Activated CD4-positive, alpha-beta memory T cell treated with anti-CD3 and anti-CD28 coated beads for 36 hours (primary cell): ENCODE measurements at regions of chr1 and their contacts with region 1.

Region 1: GRCh38 chr1:65067491-65068201 is 80.4 kb upstream of the AK4 start:
- DNase-seq: peak; percentile 66
- H3K4me3 Mint-ChIP-seq: peak overlapping the region; percentile 87
- H3K27ac Mint-ChIP-seq: peak overlapping the region; percentile 93
- H3K4me1 Mint-ChIP-seq: peaks cover 53% of the 10 kb centered on the region
- H3K27me3 Mint-ChIP-seq: no peaks in the 10 kb centered on the region

Region 2: GRCh38 chr1:63522891-63523728 is 1544.5 kb before region 1 on chr1 and contains the starts of genes EFCAB7 and ITGB3BP:
- CTCF ChIA-PET with region 1: no interaction called
- POLR2A ChIA-PET with region 1: no interaction called
- intact Hi-C with region 1: loop called (anchors 10 kb)
- DNase-seq: peak; percentile 89
- H3K4me3 Mint-ChIP-seq: peak within 1 kb of the TSS; percentile 94
- H3K27ac Mint-ChIP-seq: peak within 1 kb of the TSS; percentile 94
- H3K4me1 Mint-ChIP-seq: peaks cover 27% of the 10 kb centered on the region
- H3K27me3 Mint-ChIP-seq: no peaks in the 10 kb centered on the region
- total RNA-seq, gene EFCAB7: 5.6 to 5.8 TPM
- total RNA-seq, gene ITGB3BP: 59.5 to 61.1 TPM

Region 3: GRCh38 chr1:64823691-64824476 is 243.8 kb before region 1 on chr1:
- CTCF ChIA-PET with region 1: interaction called, 40 read pairs
- POLR2A ChIA-PET with region 1: no interaction called
- intact Hi-C with region 1: loop called (anchors 1 kb)
- DNase-seq: peak; percentile 64
- H3K4me3 Mint-ChIP-seq: no peak overlapping the region
- H3K27ac Mint-ChIP-seq: no peak overlapping the region
- H3K4me1 Mint-ChIP-seq: peaks cover 29% of the 10 kb centered on the region
- H3K27me3 Mint-ChIP-seq: no peaks in the 10 kb centered on the region

Region 4: DNA sequence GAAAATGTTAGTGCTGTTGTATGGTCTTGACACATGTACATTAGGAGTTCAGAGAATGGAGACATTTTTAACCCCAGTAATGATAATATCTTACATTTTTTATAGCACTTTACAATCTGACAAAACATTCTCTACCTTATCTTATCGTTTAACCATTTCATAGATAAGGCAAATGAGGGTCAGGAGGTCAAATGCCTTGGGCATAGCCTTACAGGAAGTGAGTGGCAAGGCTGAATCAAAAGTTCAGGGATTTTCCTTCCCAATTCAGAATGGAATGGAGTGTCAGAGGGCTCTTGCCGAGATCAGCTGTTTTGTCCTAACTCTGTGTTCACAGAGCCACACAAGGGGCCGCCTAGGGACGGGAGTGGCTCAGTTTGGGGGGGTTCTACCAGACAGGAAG is 22.8 kb after region 1 on chr1:
- CTCF ChIA-PET with region 1: no interaction called
- POLR2A ChIA-PET with region 1: no interaction called
- intact Hi-C with region 1: no loop called
- DNase-seq: no peak
- H3K4me3 Mint-ChIP-seq: no peak overlapping the region
- H3K27ac Mint-ChIP-seq: no peak overlapping the region
- H3K4me1 Mint-ChIP-seq: no peaks in the 10 kb centered on the region
- H3K27me3 Mint-ChIP-seq: peaks cover 2% of the 10 kb centered on the region

Region 5: GRCh38 chr1:65254319-65255034 is 186.8 kb after region 1 on chr1:
- CTCF ChIA-PET with region 1: no interaction called
- POLR2A ChIA-PET with region 1: no interaction called
- intact Hi-C with region 1: loop called (anchors 2 kb)
- DNase-seq: peak; percentile 89
- H3K4me3 Mint-ChIP-seq: peak overlapping the region; percentile 84
- H3K27ac Mint-ChIP-seq: no peak overlapping the region
- H3K4me1 Mint-ChIP-seq: peaks cover 16% of the 10 kb centered on the region
- H3K27me3 Mint-ChIP-seq: peaks cover 10% of the 10 kb centered on the region

Region 6: DNA sequence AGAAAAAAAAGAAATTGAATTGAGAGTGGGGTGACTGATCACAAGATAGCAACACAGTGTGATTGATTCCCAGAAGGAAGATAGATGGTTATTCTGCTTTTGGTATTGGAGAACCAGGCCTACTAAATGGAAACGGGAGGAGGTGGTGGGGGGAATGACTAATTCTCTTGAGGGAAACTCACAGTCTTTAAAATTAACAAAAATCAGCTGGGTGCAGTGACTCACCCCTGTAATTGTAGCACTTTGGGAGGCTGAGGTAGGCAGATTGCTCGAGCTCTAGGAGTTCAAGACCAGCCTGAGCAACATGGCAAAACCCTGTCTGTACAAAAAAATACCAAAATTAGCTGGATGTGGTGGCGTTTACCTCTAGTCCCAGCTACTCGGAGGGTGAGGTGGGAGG is 590.5 kb after region 1 on chr1:
- CTCF ChIA-PET with region 1: no interaction called
- POLR2A ChIA-PET with region 1: no interaction called
- intact Hi-C with region 1: no loop called
- DNase-seq: no peak
- H3K4me3 Mint-ChIP-seq: no peak overlapping the region
- H3K27ac Mint-ChIP-seq: no peak overlapping the region
- H3K4me1 Mint-ChIP-seq: no peaks in the 10 kb centered on the region
- H3K27me3 Mint-ChIP-seq: peaks cover 6% of the 10 kb centered on the region

Region 7: DNA sequence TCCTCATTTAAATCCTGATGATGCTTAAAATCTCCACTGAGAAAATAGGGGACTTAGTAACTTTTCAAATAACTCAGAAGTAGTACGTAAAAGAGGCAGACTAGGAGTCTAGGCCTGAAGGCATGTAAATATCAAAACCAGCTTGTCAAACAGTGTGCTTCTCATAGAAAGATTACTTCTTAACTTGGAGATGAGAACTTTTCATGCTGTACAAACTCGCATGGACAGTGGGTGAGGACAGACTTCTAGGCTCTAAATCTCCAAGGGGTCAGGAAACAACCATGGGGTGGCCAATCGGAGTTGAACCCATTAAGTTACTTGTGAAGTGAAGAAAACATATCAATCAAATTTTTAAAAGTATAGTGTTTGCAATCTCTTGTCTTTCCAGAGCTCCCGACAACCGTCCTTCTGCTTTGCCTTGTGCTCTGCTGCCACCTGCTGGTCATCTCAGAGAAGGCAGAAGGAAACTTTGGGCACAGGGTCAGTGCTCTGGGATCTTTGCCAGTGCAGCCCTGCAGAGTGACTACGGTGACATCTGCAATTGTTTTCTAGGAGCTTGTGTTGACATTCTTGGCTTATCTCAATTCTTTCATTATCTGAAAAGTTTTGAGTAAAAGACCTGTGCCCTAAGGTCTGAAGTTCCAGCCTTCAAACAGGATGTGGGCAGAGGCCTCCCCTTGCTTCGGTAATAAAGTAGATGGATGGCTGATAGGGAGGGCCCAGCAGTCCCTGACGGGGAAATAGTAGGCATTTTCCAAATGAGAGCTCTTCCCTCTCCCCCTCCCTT is 620.0 kb after region 1 on chr1:
- CTCF ChIA-PET with region 1: interaction called, 11 read pairs
- POLR2A ChIA-PET with region 1: no interaction called
- intact Hi-C with region 1: loop called (anchors 2 kb)
- DNase-seq: peak; percentile 85
- H3K4me3 Mint-ChIP-seq: no peak overlapping the region
- H3K27ac Mint-ChIP-seq: no peak overlapping the region
- H3K4me1 Mint-ChIP-seq: no peaks in the 10 kb centered on the region
- H3K27me3 Mint-ChIP-seq: peaks cover 10% of the 10 kb centered on the region

Region 8: GRCh38 chr1:66929999-66930822 is 1862.6 kb after region 1 on chr1:
- CTCF ChIA-PET with region 1: no interaction called
- POLR2A ChIA-PET with region 1: no interaction called
- intact Hi-C with region 1: loop called (anchors 10 kb)
- DNase-seq: peak; percentile 96
- H3K4me3 Mint-ChIP-seq: peak overlapping the region; percentile 90
- H3K27ac Mint-ChIP-seq: peak overlapping the region; percentile 96
- H3K4me1 Mint-ChIP-seq: peaks cover 57% of the 10 kb centered on the region
- H3K27me3 Mint-ChIP-seq: no peaks in the 10 kb centered on the region